Dorsolateral prefrontal cortex (tissue), 120 donors: ENCODE measurements at regions of chr13 and their contacts with region 1.

Region 1: DNA sequence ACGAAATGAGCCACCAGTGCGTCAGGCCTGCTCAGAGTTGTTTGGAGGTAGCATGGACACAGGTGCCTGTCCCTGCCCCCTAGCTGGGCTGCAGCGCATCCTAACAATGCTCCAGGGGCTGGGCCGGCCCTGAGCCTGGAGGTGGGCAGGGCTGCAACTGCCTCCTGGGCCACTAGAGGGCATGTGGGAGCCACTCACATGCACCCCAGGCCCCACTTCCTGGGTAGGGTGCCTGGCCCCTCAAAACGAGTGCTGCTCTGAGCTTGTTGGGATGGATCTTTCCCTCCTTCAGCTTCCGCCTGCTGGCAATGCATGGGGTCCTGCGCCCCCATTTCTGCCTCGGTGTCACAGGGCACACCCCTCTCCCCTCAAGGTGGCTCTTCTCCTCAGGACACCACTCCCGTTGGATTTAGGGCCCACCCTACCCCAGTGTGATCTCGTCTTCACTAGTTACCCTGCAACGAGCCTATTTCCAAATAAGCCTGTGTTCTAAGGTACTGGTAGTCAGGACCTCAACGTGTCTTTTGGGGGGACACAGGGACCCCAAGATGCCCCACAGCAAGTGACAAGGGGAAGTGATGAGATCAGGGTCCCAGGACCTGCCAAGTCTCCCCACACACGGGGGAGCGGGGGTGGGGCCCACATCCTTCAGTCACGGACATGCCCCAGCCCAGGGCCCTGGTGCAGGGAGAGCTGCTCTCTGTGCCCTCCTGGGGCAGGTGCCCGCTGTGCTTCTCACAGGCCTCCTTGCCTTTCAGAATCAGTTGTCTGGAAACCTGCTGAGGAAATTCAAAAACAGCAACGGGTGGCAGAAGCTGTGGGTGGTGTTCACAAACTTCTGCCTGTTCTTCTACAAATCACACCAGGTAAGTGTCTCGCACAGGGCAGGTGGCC is 131.3 kb downstream of the STK24 start:
- DNase-seq: peak in 9 of 10 donors; percentile 55 to 74 (median 65)
- H3K4me3 ChIP-seq: no peak overlapping the region
- H3K27ac ChIP-seq: peak overlapping the region in 37 of 59 donors; percentile 13 to 87 (median 47)
- H3K27me3 ChIP-seq: no peaks in the 10 kb centered on the region
- CTCF ChIP-seq: peak; percentile 71 to 98 (median 95)

Region 2: DNA sequence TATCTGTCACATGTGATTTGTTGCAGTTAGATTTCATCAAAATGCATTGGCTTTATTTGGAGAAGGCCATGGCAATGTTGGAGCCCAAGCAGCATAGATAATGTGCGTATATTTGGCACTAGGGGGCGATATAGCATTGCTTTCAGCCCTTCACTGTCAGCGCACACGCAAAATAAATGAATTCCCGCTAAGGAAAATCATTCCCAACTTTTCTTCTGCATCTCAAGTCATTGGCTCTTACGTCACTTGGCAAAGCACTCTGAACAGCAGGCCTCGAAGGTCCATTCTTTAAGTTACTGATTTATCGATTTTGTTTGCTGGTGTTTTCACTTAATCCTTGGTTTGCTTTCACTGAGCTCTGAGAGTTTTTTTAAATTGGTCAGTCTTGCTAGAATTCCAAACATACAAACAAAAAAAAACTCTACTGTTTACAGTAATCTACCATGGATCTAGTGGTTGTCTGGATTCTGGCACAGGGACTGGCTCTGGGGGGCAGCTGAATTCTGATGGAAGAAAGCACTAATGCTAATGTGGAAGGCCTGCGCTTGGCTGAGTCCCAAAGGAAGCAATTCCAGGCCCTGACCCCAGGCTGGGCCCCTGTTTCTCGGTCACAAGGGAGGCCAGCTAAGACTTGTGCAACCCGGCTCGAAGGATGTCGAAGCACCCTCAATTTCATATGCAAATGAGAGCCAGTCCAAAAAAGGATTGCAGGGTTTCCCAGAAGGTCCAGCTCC is 589.9 kb before region 1 on chr13:
- intact Hi-C with region 1: loop called in 1 of 2 experiments (anchors 5 kb)
- DNase-seq: peak in 5 of 10 donors; percentile 20 to 51 (median 41)
- H3K4me3 ChIP-seq: peak overlapping the region in 9 of 59 donors; percentile 3 to 33 (median 21)
- H3K27ac ChIP-seq: peak overlapping the region in 3 of 59 donors; percentile 24 to 38 (median 29)
- H3K27me3 ChIP-seq: peaks cover 0 to 6% (median 0%) of the 10 kb centered on the region in 45 donors
- CTCF ChIP-seq: peak; percentile 80 to 95 (median 88)

Region 3: GRCh38 chr13:98142380-98143156 is 303.0 kb before region 1 on chr13 and contains the start of gene FARP1:
- intact Hi-C with region 1: loop called in 1 of 2 experiments (anchors 10 kb)
- DNase-seq: peak in 9 of 10 donors; percentile 17 to 79 (median 48)
- H3K4me3 ChIP-seq: peak within 1 kb of the TSS; percentile 30 to 81 (median 67)
- H3K27ac ChIP-seq: peak within 1 kb of the TSS in 53 of 59 donors; percentile 3 to 88 (median 76)
- H3K27me3 ChIP-seq: peaks cover 0 to 48% (median 0%) of the 10 kb centered on the region in 45 donors
- CTCF ChIP-seq: peak in 26 of 56 donors; percentile 12 to 56 (median 28)
- total RNA-seq, gene FARP1: 68.6 to 202 (median 123) TPM

Region 4: DNA sequence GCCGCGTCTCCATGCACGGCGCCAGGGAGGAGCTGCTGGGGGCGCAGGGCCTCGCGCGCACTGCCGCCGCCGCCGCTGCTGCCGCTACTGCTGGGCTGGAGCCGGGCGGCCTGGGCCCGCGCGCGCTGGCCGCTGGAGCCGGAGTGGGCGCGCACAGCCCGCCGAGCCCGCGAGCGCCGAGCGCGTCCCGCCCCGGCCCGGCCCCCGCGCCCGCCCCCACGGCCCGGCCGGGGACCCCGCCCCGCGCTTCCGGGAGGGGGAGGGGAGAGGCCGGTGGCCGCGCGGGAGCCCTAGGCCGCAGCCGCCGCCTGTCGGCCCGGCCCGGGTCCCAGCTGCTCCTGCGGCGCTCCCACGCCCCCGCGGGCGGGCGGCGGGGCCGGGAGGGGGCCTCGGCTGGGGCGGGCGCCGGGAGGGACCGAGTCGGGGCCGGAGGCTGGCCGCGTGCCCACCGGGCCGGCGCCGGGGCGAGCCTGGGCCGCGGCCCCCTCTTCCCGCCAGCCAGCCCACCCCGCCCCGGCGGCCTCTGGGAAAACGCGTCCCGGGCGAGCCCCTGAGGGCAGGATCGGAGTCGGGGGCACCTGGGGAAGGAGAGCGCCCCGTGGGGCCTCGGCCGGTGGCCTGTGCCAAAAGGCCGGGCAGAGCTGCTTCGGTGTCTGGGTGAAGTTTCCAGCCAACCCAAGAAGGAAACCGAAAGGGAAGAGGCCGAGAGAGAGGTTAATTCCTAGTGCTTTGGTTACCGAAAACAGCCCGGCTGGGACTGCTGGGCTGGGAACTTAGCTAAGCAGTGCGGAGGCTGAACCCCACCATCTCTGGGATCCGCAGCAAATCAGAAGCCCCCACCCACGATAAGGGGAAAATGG is 131.6 kb after region 1 on chr13 and contains the start of gene STK24:
- intact Hi-C with region 1: loop called (anchors 5 kb)
- DNase-seq: peak in 5 of 10 donors; percentile 27 to 81 (median 48)
- H3K4me3 ChIP-seq: peak within 1 kb of the TSS; percentile 68 to 97 (median 87)
- H3K27ac ChIP-seq: peak within 1 kb of the TSS; percentile 55 to 98 (median 92)
- H3K27me3 ChIP-seq: no peaks in the 10 kb centered on the region
- CTCF ChIP-seq: no peak
- total RNA-seq, gene STK24: 28.8 to 87.6 (median 61.8) TPM

Region 5: GRCh38 chr13:98653463-98653985 is 207.9 kb after region 1 on chr13:
- intact Hi-C with region 1: loop called (anchors 1 to 5 kb)
- DNase-seq: peak; percentile 51 to 83 (median 76)
- H3K4me3 ChIP-seq: peak overlapping the region in 3 of 59 donors; percentile 3 to 24 (median 5)
- H3K27ac ChIP-seq: no peak overlapping the region
- H3K27me3 ChIP-seq: no peaks in the 10 kb centered on the region
- CTCF ChIP-seq: peak; percentile 65 to 94 (median 88)

Region 6: DNA sequence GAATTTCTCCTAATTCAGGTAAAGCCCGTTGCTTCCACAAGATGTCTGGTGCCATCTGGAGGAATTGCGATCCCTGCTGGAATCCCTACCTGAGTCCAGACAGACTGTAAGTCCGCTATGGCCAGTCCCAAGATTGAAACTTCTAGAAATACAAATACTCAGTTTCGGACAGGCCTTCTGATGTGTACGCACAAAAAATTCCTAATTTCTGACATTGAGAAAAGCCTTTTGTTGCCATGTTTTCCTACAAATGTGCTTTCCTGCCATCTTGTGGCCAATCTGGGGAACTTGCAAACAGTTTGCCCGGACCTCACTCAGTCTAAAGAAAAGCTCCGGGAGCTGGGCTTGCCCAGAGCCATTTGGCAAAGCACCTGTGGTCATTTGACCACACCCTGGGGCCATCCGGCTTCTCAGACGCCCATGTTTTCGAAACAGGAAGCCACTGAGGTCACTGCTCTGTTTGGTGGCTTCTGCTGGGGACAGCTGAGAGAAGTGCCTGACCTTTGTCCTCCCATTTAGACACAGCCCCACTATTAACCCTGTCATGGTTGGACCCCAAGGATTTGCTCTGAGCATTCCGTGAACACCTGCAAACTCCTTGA is 227.5 kb after region 1 on chr13:
- intact Hi-C with region 1: loop called (anchors 5 kb)
- DNase-seq: peak in 7 of 10 donors; percentile 38 to 70 (median 49)
- H3K4me3 ChIP-seq: peak overlapping the region in 26 of 59 donors; percentile 7 to 54 (median 25)
- H3K27ac ChIP-seq: peak overlapping the region in 1 of 59 donors; percentile 2
- H3K27me3 ChIP-seq: peaks cover 0 to 6% (median 0%) of the 10 kb centered on the region in 45 donors
- CTCF ChIP-seq: peak; percentile 70 to 99 (median 91)